CD4-positive, alpha-beta T cell (primary cell): ENCODE measurements at regions of chr9 and their contacts with region 1.

Region 1: GRCh38 chr9:108903420-108904103 is 30.4 kb downstream of the ELP1 start:
- DNase-seq: no peak
- ATAC-seq: no peak
- H3K4me3 ChIP-seq: no peak overlapping the region
- H3K4me3 Mint-ChIP-seq: no peak overlapping the region
- H3K27ac ChIP-seq: no peak overlapping the region
- H3K27ac Mint-ChIP-seq: no peak overlapping the region
- H3K4me1 ChIP-seq: no peaks in the 10 kb centered on the region
- H3K4me1 Mint-ChIP-seq: no peaks in the 10 kb centered on the region
- H3K27me3 ChIP-seq: no peaks in the 10 kb centered on the region
- H3K27me3 Mint-ChIP-seq: no peaks in the 10 kb centered on the region
- CTCF ChIP-seq: no peak

Region 2: GRCh38 chr9:108062680-108063079 is 840.9 kb before region 1 on chr9:
- CTCF ChIA-PET with region 1: no interaction called
- POLR2A ChIA-PET with region 1: no interaction called
- intact Hi-C with region 1: no loop called
- DNase-seq: no peak
- ATAC-seq: no peak
- H3K4me3 ChIP-seq: no peak overlapping the region
- H3K4me3 Mint-ChIP-seq: no peak overlapping the region
- H3K27ac ChIP-seq: no peak overlapping the region
- H3K27ac Mint-ChIP-seq: no peak overlapping the region
- H3K4me1 ChIP-seq: no peaks in the 10 kb centered on the region
- H3K4me1 Mint-ChIP-seq: no peaks in the 10 kb centered on the region
- H3K27me3 ChIP-seq: no peaks in the 10 kb centered on the region
- H3K27me3 Mint-ChIP-seq: no peaks in the 10 kb centered on the region
- CTCF ChIP-seq: no peak

Region 3: DNA sequence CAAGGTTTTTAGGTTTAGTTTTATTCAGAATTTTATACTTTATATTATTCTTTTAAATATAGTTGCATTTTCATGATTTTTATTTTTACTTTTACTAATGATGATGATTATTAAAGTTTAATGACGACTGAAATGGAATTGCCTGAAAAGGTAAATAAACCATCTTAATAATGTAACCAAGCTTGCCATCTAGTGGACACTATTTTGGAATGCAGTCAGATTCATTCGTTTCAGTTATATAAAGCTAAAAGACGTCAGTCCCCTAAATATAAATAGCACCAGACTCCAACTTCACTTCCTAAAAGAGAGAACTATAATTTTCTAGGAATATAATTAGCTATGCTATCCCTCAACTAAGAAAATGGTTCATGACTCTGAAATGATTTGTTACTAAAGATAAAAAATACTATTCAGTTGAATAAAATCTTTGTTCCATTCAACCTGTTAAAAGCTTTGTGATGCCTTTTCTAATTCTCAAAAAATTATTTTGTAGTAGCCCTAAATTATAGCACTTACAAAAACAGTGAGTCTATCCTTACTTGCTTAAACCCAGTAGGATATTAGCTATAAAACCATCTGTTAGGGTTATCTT is 50.5 kb after region 1 on chr9:
- CTCF ChIA-PET with region 1: interaction called, 5 read pairs
- POLR2A ChIA-PET with region 1: no interaction called
- intact Hi-C with region 1: loop called in 1 of 2 experiments (anchors 5 kb)
- DNase-seq: peak in 3 of 14 experiments; percentile 49 to 65 (median 62)
- ATAC-seq: no peak
- H3K4me3 ChIP-seq: no peak overlapping the region
- H3K4me3 Mint-ChIP-seq: no peak overlapping the region
- H3K27ac ChIP-seq: no peak overlapping the region
- H3K27ac Mint-ChIP-seq: no peak overlapping the region
- H3K4me1 ChIP-seq: no peaks in the 10 kb centered on the region
- H3K4me1 Mint-ChIP-seq: no peaks in the 10 kb centered on the region
- H3K27me3 ChIP-seq: no peaks in the 10 kb centered on the region
- H3K27me3 Mint-ChIP-seq: no peaks in the 10 kb centered on the region
- CTCF ChIP-seq: peak; percentile 72

Region 4: DNA sequence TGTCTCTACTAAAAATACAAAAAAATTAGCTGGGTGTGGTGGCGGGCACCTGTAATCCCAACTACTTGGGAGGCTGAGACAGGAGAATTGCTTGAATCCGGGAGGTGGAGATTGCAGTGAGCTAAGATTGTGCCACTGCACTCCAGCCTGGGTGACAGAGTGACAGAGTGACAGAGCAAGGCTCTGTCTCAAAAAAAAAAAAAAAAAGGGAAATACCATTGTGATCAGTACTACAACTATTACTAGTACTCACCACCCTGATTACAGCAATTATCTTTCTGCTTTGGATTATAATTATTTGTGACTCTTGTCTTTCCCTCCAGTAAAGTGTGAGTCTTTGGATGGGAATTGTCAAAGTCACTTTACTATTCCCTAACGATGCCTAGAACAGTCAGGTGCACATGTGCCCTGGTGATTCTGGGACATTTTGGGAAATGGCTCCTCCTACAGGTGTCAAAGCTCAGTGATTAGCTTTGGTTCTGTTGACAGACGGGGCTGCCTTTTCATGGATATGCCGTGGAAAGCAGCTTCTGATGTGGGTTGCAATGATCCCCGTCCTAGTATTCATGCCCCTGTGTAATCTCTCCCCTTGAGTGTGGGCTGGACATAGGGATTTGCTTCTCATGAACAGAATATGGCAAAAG is 295.3 kb after region 1 on chr9:
- CTCF ChIA-PET with region 1: no interaction called
- POLR2A ChIA-PET with region 1: no interaction called
- intact Hi-C with region 1: loop called in 1 of 2 experiments (anchors 5 kb)
- DNase-seq: peak in 4 of 14 experiments; percentile 6 to 35 (median 20)
- ATAC-seq: no peak
- H3K4me3 ChIP-seq: no peak overlapping the region
- H3K4me3 Mint-ChIP-seq: no peak overlapping the region
- H3K27ac ChIP-seq: no peak overlapping the region
- H3K27ac Mint-ChIP-seq: no peak overlapping the region
- H3K4me1 ChIP-seq: no peaks in the 10 kb centered on the region
- H3K4me1 Mint-ChIP-seq: no peaks in the 10 kb centered on the region
- H3K27me3 ChIP-seq: peaks cover 0 to 6% of the 10 kb centered on the region in 2 experiments
- H3K27me3 Mint-ChIP-seq: peaks cover 11% of the 10 kb centered on the region
- CTCF ChIP-seq: peak; percentile 31